Tibial artery (tissue), 4 donors: ENCODE measurements at regions of chr6 and their contacts with region 1.

Region 1: GRCh38 chr6:41705996-41706835 is 29.2 kb downstream of the TFEB start:
- DNase-seq: peak; percentile 87 to 95
- H3K4me3 ChIP-seq: peak overlapping the region; percentile 0
- H3K27ac ChIP-seq: peak overlapping the region; percentile 86 to 93
- H3K4me1 ChIP-seq: peaks cover 0 to 52% (median 40%) of the 10 kb centered on the region in 4 donors
- H3K27me3 ChIP-seq: no peaks in the 10 kb centered on the region
- CTCF ChIP-seq: peak; percentile 70 to 75

Region 2: DNA sequence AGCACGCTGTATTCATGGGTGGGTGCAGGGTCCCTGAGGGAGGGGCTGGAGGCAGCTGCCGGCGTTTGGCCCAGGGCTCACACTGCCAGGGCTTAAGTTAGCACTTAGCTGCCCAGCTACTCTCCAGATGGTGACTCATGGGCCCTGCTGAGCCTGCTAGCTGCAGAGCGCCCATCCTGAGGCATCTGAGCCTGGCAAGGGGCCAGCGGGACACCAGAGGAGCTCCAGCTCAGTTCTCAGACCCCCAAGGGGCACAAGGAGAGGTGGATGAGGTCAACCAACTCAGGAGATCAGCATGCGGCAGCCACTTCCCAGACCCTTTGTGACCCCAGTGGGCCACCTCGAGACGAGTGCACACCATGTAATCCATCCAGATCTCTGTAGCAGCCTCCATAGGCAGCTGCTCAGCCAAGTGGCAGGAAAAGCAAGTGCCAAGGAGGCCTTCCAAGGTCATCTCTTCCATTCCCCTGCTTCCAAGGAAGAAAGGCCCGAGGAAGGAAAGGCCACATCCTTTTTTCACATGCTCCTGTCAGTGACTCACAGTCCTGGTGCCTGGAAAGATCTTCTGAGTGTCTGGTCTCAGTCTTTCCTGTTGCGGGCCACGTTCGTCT is 124.7 kb before region 1 on chr6:
- intact Hi-C with region 1: no loop called
- DNase-seq: peak in 1 of 2 donors; percentile 86
- H3K4me3 ChIP-seq: no peak overlapping the region
- H3K27ac ChIP-seq: peak overlapping the region; percentile 14 to 35
- H3K4me1 ChIP-seq: peaks cover 6 to 74% (median 38%) of the 10 kb centered on the region in 4 donors
- H3K27me3 ChIP-seq: no peaks in the 10 kb centered on the region
- CTCF ChIP-seq: no peak

Region 3: GRCh38 chr6:41655711-41656691 is 50.2 kb before region 1 on chr6:
- intact Hi-C with region 1: no loop called
- DNase-seq: no peak
- H3K4me3 ChIP-seq: no peak overlapping the region
- H3K27ac ChIP-seq: no peak overlapping the region
- H3K4me1 ChIP-seq: no peaks in the 10 kb centered on the region
- H3K27me3 ChIP-seq: peaks cover 0 to 33% of the 10 kb centered on the region in 2 donors
- CTCF ChIP-seq: no peak

Region 4: GRCh38 chr6:41735427-41736356 is 29.5 kb after region 1 on chr6 and contains the start of gene TFEB:
- intact Hi-C with region 1: loop called (anchors 2 kb)
- DNase-seq: peak; percentile 96
- H3K4me3 ChIP-seq: peak within 1 kb of the TSS; percentile 81 to 85
- H3K27ac ChIP-seq: peak within 1 kb of the TSS; percentile 94
- H3K4me1 ChIP-seq: peaks cover 6 to 35% (median 14%) of the 10 kb centered on the region in 4 donors
- H3K27me3 ChIP-seq: peaks cover 0 to 3% of the 10 kb centered on the region in 2 donors
- CTCF ChIP-seq: peak; percentile 86 to 98